Activated B cell treated with CpG ODN at 0.5 μM for 24 hours (primary cell): ENCODE measurements at regions of chr19 and their contacts with region 1.

Region 1: GRCh38 chr19:19515764-19516519 is at the start of gene NDUFA13:
- DNase-seq: peak; percentile 97
- ATAC-seq: peak; percentile 90
- H3K4me3 Mint-ChIP-seq: peak within 1 kb of the TSS; percentile 95
- H3K27ac Mint-ChIP-seq: peak within 1 kb of the TSS; percentile 93
- H3K4me1 Mint-ChIP-seq: peaks cover 38% of the 10 kb centered on the region
- H3K27me3 Mint-ChIP-seq: no peaks in the 10 kb centered on the region
- CTCF ChIP-seq: no peak
- total RNA-seq, gene NDUFA13: 294 and 317 TPM in 2 replicates

Region 2: GRCh38 chr19:19063183-19064097 is 452.5 kb before region 1 on chr19 and contains the start of gene SLC25A42:
- CTCF ChIA-PET with region 1: no interaction called
- POLR2A ChIA-PET with region 1: no interaction called
- intact Hi-C with region 1: loop called (anchors 1 kb)
- DNase-seq: peak; percentile 96
- ATAC-seq: peak; percentile 89
- H3K4me3 Mint-ChIP-seq: peak within 1 kb of the TSS; percentile 88
- H3K27ac Mint-ChIP-seq: peak within 1 kb of the TSS; percentile 89
- H3K4me1 Mint-ChIP-seq: peaks cover 52% of the 10 kb centered on the region
- H3K27me3 Mint-ChIP-seq: no peaks in the 10 kb centered on the region
- CTCF ChIP-seq: no peak
- total RNA-seq, gene SLC25A42: 14.2 and 17.5 TPM in 2 replicates

Region 3: GRCh38 chr19:19320362-19321142 is 195.4 kb before region 1 on chr19 and contains the starts of genes MAU2 and SUGP1:
- CTCF ChIA-PET with region 1: no interaction called
- POLR2A ChIA-PET with region 1: interaction called, 3 read pairs
- intact Hi-C with region 1: loop called (anchors 1 kb)
- DNase-seq: peak; percentile 82
- ATAC-seq: peak; percentile 92
- H3K4me3 Mint-ChIP-seq: peak within 1 kb of the TSS; percentile 98
- H3K27ac Mint-ChIP-seq: peak within 1 kb of the TSS; percentile 100
- H3K4me1 Mint-ChIP-seq: peaks cover 42% of the 10 kb centered on the region
- H3K27me3 Mint-ChIP-seq: no peaks in the 10 kb centered on the region
- CTCF ChIP-seq: no peak
- total RNA-seq, gene MAU2: 107 and 126 TPM in 2 replicates
- total RNA-seq, gene SUGP1: 68.6 and 73.0 TPM in 2 replicates

Region 4: GRCh38 chr19:19618219-19619051 is 102.5 kb after region 1 on chr19 and contains the start of gene PBX4:
- CTCF ChIA-PET with region 1: no interaction called
- POLR2A ChIA-PET with region 1: no interaction called
- intact Hi-C with region 1: loop called (anchors 1 kb)
- DNase-seq: peak; percentile 98
- ATAC-seq: peak; percentile 95
- H3K4me3 Mint-ChIP-seq: peak within 1 kb of the TSS; percentile 85
- H3K27ac Mint-ChIP-seq: peak within 1 kb of the TSS; percentile 83
- H3K4me1 Mint-ChIP-seq: peaks cover 35% of the 10 kb centered on the region
- H3K27me3 Mint-ChIP-seq: no peaks in the 10 kb centered on the region
- CTCF ChIP-seq: no peak
- total RNA-seq, gene PBX4: 19.4 and 21.8 TPM in 2 replicates